Right cardiac atrium (tissue), 5 donors: ENCODE measurements at regions of chr20 and their contacts with region 1.

Region 1: GRCh38 chr20:42173440-42173839 is 555.3 kb upstream of the CHD6 start:
- DNase-seq: no peak
- ATAC-seq: no peak
- H3K4me3 ChIP-seq: no peak overlapping the region
- H3K27ac ChIP-seq: no peak overlapping the region
- H3K4me1 ChIP-seq: no peaks in the 10 kb centered on the region
- H3K27me3 ChIP-seq: no peaks in the 10 kb centered on the region

Region 2: GRCh38 chr20:42051921-42052320 is 121.5 kb before region 1 on chr20:
- intact Hi-C with region 1: no loop called
- DNase-seq: no peak
- ATAC-seq: no peak
- H3K4me3 ChIP-seq: no peak overlapping the region
- H3K27ac ChIP-seq: no peak overlapping the region
- H3K4me1 ChIP-seq: no peaks in the 10 kb centered on the region
- H3K27me3 ChIP-seq: no peaks in the 10 kb centered on the region

Region 3: DNA sequence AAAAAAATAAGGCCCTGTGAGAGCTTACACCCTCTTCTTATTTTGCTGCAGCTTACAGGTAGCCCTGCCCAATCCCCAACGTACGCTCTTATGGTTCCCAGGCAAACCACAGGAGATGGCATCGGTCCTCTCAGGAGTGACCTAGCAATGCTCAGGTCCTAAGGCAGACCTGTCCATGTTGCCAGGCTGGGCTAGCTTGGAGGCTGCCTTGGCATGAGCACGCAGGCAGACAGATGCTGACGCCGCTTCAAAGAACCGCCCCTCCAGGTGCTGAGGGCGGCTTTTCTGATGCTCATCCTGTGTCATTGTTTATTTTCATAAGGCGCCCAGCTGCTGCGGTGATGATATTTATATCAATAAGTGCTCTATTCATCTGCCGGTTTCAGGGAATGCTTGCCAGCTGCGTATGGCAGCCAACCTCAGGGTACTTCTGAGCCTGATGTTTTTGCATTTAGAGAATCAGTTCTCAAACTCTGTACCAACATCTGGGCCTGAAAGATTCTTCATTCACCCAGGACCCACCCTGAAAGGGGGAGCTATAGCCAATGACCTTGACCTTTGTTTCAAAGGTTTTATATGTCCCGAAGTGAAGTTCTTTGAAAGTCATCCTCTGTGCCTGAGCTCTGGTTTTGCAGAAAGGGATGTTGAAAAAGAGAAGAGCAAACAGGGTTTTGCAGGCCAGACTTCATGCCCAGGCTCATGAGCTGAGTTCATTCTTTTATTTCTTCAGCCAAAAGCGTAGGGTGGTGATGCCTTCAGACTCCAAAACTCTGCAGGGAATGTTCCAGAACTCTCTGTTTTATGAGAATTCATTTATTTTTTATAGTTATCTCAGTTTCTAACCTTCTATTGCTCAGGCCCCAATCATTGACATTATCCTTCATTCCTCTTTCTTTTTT is 79.6 kb before region 1 on chr20:
- intact Hi-C with region 1: no loop called
- DNase-seq: no peak
- ATAC-seq: peak in 1 of 2 donors; percentile 24
- H3K4me3 ChIP-seq: no peak overlapping the region
- H3K27ac ChIP-seq: no peak overlapping the region
- H3K4me1 ChIP-seq: no peaks in the 10 kb centered on the region
- H3K27me3 ChIP-seq: no peaks in the 10 kb centered on the region

Region 4: GRCh38 chr20:42110301-42110700 is 63.1 kb before region 1 on chr20:
- intact Hi-C with region 1: no loop called
- DNase-seq: no peak
- ATAC-seq: no peak
- H3K4me3 ChIP-seq: no peak overlapping the region
- H3K27ac ChIP-seq: no peak overlapping the region
- H3K4me1 ChIP-seq: no peaks in the 10 kb centered on the region
- H3K27me3 ChIP-seq: no peaks in the 10 kb centered on the region

Region 5: DNA sequence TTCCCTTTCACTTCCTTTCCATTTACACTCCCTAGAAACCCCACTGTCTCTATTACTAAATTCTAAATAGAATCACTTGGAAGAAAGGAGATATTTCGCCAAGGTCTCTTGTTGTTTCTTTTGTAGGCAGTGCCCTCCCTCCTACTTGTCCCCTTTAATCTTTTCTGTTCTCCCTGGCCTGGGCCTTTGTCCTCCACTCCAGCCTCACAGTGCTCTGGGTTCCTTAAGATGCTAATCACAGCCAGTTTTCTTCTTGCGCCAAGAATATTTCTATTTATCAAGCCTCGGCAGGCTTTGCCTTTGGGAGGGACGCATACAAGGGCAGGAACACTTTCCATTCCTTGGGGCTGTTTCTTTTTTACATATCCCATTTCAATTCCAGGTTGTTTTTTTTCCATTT is 34.7 kb before region 1 on chr20:
- intact Hi-C with region 1: loop called in 1 of 4 experiments (anchors 2 kb)
- DNase-seq: no peak
- ATAC-seq: no peak
- H3K4me3 ChIP-seq: no peak overlapping the region
- H3K27ac ChIP-seq: no peak overlapping the region
- H3K4me1 ChIP-seq: no peaks in the 10 kb centered on the region
- H3K27me3 ChIP-seq: no peaks in the 10 kb centered on the region